ENCODE measurements at regions of chr2 and their contacts with region 1.

Region 1: GRCh38 chr2:10139536-10139935 is 17.0 kb downstream of the RRM2 start:
- DNase-seq: no peak
- ATAC-seq: no peak

Region 2: DNA sequence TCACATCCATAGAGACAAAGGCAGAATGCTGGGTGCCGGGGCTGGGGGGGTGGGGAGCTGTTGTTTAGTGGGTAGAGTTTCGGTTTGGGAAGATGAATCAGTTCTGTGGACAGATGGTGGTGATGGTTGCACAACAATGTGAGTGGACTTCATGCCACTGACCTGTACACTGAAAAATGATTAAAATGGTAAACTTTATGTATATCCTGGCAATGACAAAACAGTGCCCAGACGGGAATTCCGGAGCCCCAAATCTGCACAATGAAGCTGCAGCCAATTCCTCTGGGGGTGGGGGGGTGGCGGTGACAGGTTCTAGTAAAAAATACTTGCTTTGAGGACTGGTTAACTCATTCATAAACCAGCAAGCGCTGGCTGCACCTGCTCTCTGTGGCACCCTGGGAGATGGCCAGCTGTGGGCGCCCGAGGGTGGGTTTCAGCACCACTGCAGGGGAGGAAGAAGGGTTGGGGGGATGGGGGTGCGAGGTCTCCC is 81.4 kb after region 1 on chr2:
- intact Hi-C with region 1: no loop called
- DNase-seq: no peak
- ATAC-seq: no peak

Region 3: DNA sequence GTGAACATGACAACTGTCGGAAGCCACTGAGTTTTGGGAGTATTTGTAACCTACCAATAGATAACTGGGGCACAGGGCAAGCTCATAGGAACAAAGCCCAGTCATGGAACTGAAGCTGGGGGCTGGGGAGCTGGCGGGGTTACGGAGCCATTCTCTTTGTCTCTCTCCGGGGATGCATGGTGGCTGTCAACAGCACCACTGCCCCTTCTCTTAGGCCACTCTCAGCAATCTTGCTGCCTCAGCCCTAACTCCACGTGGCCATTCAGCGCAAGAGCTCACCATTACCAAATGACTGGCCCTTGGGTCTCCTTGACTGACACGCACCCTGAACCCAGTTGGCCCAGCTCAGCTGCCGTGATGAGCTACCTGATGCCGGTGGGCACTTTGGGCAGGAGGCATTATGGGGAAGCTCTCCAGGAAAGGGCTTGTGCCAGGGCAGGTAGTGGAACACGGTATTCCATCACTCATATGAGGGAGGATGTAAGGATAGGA is 342.2 kb after region 1 on chr2:
- intact Hi-C with region 1: loop called (anchors 2 kb)
- DNase-seq: no peak
- ATAC-seq: no peak